CD8-positive, alpha-beta T cell (primary cell): ENCODE measurements at regions of chr5 and their contacts with region 1.

Region 1: DNA sequence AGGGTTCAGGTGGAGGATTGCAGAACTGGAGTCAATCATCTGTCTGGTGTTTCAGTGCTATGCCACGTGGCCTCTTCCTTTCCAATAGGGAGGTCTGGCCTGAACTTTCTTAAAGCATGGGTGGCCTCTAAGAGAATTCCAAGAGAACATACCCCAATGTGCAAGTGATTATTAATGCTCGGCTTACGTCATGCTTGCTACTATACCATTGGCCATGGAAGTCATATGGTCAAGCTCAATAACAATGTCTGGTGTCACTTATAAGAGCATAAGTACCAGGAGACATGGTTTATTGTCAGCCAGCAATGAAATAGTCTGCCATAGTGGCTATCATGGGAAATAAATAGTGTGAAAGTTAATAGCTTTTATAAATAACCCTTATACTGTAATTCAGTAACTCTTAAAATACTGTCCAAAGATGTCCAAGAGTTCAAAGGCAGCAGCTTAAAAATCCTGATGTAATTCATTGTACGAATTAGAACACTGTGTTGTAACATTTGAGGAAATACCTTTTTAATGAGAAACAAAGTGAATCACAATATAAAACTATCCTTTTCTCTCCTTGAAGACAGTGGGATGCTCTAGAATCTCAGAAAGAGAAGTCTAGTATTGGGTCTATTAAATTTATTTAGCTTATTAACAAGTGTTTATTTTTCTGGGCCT is 355.4 kb upstream of the PRR16 start:
- DNase-seq: no peak
- ATAC-seq: no peak
- H3K4me3 ChIP-seq: no peak overlapping the region
- H3K4me3 Mint-ChIP-seq: no peak overlapping the region
- H3K27ac ChIP-seq: no peak overlapping the region
- H3K27ac Mint-ChIP-seq: no peak overlapping the region
- H3K4me1 ChIP-seq: no peaks in the 10 kb centered on the region
- H3K4me1 Mint-ChIP-seq: no peaks in the 10 kb centered on the region
- H3K27me3 ChIP-seq: no peaks in the 10 kb centered on the region
- H3K27me3 Mint-ChIP-seq: no peaks in the 10 kb centered on the region
- CTCF ChIP-seq: no peak

Region 2: GRCh38 chr5:120043431-120043830 is 65.3 kb before region 1 on chr5:
- CTCF ChIA-PET with region 1: no interaction called
- POLR2A ChIA-PET with region 1: no interaction called
- intact Hi-C with region 1: loop called in 1 of 2 experiments (anchors 2 kb)
- DNase-seq: no peak
- ATAC-seq: no peak
- H3K4me3 ChIP-seq: no peak overlapping the region
- H3K4me3 Mint-ChIP-seq: no peak overlapping the region
- H3K27ac ChIP-seq: no peak overlapping the region
- H3K27ac Mint-ChIP-seq: no peak overlapping the region
- H3K4me1 ChIP-seq: no peaks in the 10 kb centered on the region
- H3K4me1 Mint-ChIP-seq: no peaks in the 10 kb centered on the region
- H3K27me3 ChIP-seq: no peaks in the 10 kb centered on the region
- H3K27me3 Mint-ChIP-seq: no peaks in the 10 kb centered on the region
- CTCF ChIP-seq: no peak